ENCODE measurements at regions of chr7 and their contacts with region 1.

Region 1: GRCh38 chr7:7103343-7104313 is 78.7 kb upstream of the C1GALT1 start:
- DNase-seq: peak; percentile 7
- ATAC-seq: peak; percentile 88
- H3K4me3 ChIP-seq: no peak overlapping the region
- H3K27ac ChIP-seq: no peak overlapping the region
- H3K4me1 ChIP-seq: no peaks in the 10 kb centered on the region
- H3K27me3 ChIP-seq: no peaks in the 10 kb centered on the region
- CTCF ChIP-seq: peak; percentile 49 to 69 (median 56); a peak in 5 of 6 replicates
- EP300 ChIP-seq: no peak
- POLR2A ChIP-seq: no peak
- RAD21 ChIP-seq: peak; percentile 81

Region 2: DNA sequence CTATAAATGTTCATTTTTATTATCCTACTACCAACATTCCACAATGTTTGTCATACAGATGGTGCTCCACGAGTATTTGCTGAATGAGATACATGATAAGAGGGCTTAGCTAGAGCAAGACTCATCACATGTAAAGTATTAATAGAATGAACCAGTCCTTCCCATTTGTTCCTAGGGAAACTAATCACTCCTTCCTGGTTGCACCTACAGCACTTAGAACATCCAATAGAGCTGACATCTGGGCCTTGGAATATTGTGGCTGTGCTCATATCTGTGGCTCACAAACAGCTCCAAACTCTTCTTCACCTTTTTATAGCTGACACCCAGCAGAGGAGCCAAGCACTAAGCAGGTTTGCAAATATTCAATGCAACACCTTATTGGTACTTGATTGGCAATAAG is 13.2 kb before region 1 on chr7:
- CTCF ChIA-PET with region 1: interaction called, 56 read pairs
- POLR2A ChIA-PET with region 1: no interaction called
- RAD21 ChIA-PET with region 1: interaction called, 4 read pairs
- SMC1A ChIA-PET with region 1: interaction called, 5 read pairs
- in situ Hi-C with region 1: no loop called
- intact Hi-C with region 1: no loop called
- DNase-seq: no peak
- ATAC-seq: no peak
- H3K4me3 ChIP-seq: no peak overlapping the region
- H3K27ac ChIP-seq: no peak overlapping the region
- H3K4me1 ChIP-seq: no peaks in the 10 kb centered on the region
- H3K27me3 ChIP-seq: no peaks in the 10 kb centered on the region
- CTCF ChIP-seq: no peak
- EP300 ChIP-seq: no peak
- POLR2A ChIP-seq: no peak
- RAD21 ChIP-seq: no peak

Region 3: DNA sequence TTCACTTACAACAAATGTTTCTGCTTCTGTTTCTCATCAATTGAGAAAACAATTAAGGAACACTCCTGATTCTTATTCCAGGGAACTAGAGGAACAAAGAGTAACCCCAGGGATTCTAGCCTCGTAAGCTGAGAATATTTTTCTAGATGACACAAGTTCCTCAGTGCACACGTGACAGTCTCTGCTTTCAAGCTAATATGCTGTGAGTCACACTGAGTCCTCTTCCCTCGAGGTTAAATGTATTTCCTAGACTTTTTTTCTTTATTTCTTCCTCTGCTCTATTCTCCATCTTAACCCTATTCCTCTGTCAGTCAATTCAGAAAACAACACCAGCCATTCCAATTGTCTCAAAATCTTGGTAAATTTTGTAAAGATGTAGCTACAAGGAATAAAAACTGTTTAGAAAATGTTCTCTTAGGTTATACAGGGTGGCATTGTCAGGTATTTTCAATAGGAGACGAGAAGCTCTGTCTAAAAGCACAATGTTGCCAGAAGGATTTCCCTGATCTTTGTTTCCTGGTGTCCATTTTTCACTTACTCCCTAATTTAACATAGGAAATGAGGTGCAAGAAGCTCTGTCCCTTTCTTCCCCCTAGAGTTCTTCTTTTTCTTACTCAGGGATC is 72.9 kb after region 1 on chr7:
- CTCF ChIA-PET with region 1: interaction called, 8 read pairs
- POLR2A ChIA-PET with region 1: no interaction called
- RAD21 ChIA-PET with region 1: interaction called, 9 read pairs
- SMC1A ChIA-PET with region 1: interaction called, 10 read pairs
- in situ Hi-C with region 1: no loop called
- intact Hi-C with region 1: no loop called
- DNase-seq: no peak
- ATAC-seq: no peak
- H3K4me3 ChIP-seq: no peak overlapping the region
- H3K27ac ChIP-seq: no peak overlapping the region
- H3K4me1 ChIP-seq: peaks cover 3% of the 10 kb centered on the region
- H3K27me3 ChIP-seq: no peaks in the 10 kb centered on the region
- CTCF ChIP-seq: no peak
- EP300 ChIP-seq: no peak
- POLR2A ChIP-seq: no peak
- RAD21 ChIP-seq: no peak

Region 4: DNA sequence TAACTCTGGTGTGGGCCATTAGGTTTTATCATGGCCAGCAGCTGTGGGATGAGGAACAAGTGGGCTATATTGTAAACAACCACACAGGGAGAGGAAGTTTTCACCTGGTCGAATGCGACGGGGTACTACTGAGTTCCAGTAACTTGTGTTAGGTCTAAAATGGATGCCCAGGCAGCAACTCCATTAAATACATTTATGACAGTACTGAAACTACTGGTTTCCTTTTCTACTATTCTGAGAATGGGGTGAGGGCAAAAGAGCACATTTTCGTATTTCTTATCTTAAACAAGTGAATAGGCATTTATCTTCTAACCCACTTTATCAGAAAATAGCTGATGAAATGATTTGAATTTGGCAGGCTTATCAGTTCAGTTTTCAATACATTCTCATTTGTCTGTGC is 188.5 kb after region 1 on chr7:
- CTCF ChIA-PET with region 1: interaction called, 5 read pairs
- POLR2A ChIA-PET with region 1: no interaction called
- RAD21 ChIA-PET with region 1: no interaction called
- SMC1A ChIA-PET with region 1: no interaction called
- in situ Hi-C with region 1: no loop called
- intact Hi-C with region 1: loop called (anchors 10 kb)
- DNase-seq: no peak
- ATAC-seq: no peak; the same call in 2 of the 3 replicates
- H3K4me3 ChIP-seq: no peak overlapping the region
- H3K27ac ChIP-seq: no peak overlapping the region
- H3K4me1 ChIP-seq: no peaks in the 10 kb centered on the region
- H3K27me3 ChIP-seq: no peaks in the 10 kb centered on the region
- CTCF ChIP-seq: no peak
- EP300 ChIP-seq: no peak
- POLR2A ChIP-seq: no peak
- RAD21 ChIP-seq: no peak

Region 5: DNA sequence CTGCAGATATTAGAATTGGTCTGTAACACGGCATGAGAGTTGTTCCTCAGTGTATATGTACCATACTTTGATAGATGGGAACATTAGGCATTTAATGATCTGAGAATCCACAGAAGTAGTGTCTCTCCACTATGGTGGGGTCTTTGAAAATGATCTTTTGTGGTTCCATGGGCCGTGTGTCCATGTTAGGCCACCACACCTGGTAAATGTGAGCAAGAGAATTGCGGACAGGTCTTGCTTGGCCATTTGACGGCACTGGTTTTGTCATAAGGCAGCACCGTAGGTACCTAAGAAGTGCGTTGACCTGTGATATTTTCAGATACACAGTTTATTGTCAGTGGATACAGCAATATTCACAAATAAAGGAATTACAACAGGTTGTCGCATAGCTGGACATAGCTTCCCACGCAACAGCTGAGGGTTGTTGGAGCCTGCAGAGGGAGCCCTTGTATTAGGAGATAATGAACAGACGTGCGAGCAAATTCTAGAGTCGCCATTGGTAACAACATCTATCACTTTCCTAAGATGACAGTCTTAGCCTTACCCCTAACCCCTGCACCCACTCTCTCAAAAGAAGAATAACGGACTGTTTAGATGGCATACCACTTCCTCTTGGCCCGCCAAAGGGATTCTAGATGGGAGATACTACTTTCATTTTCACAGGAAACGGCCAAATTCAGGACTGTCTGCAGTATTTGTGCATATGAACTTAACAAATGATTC is 320.7 kb after region 1 on chr7:
- CTCF ChIA-PET with region 1: interaction called, 27 read pairs
- POLR2A ChIA-PET with region 1: no interaction called
- RAD21 ChIA-PET with region 1: interaction called, 8 read pairs
- SMC1A ChIA-PET with region 1: interaction called, 17 read pairs
- in situ Hi-C with region 1: no loop called
- intact Hi-C with region 1: loop called (anchors 5 kb)
- DNase-seq: peak; percentile 37
- ATAC-seq: peak; percentile 92
- H3K4me3 ChIP-seq: peak overlapping the region; percentile 41
- H3K27ac ChIP-seq: no peak overlapping the region
- H3K4me1 ChIP-seq: no peaks in the 10 kb centered on the region
- H3K27me3 ChIP-seq: no peaks in the 10 kb centered on the region
- CTCF ChIP-seq: peak; percentile 66 to 75 (median 66)
- EP300 ChIP-seq: no peak
- POLR2A ChIP-seq: no peak
- RAD21 ChIP-seq: peak; percentile 76

Region 6: GRCh38 chr7:7542251-7542835 is 438.7 kb after region 1 on chr7:
- CTCF ChIA-PET with region 1: interaction called, 20 read pairs
- POLR2A ChIA-PET with region 1: no interaction called
- RAD21 ChIA-PET with region 1: interaction called, 11 read pairs
- SMC1A ChIA-PET with region 1: interaction called, 23 read pairs
- in situ Hi-C with region 1: loop called (anchors 5 kb)
- intact Hi-C with region 1: loop called (anchors 2 kb)
- DNase-seq: no peak
- ATAC-seq: no peak
- H3K4me3 ChIP-seq: no peak overlapping the region
- H3K27ac ChIP-seq: no peak overlapping the region
- H3K4me1 ChIP-seq: no peaks in the 10 kb centered on the region
- H3K27me3 ChIP-seq: no peaks in the 10 kb centered on the region
- CTCF ChIP-seq: no peak
- EP300 ChIP-seq: no peak
- POLR2A ChIP-seq: no peak
- RAD21 ChIP-seq: no peak

Region 7: DNA sequence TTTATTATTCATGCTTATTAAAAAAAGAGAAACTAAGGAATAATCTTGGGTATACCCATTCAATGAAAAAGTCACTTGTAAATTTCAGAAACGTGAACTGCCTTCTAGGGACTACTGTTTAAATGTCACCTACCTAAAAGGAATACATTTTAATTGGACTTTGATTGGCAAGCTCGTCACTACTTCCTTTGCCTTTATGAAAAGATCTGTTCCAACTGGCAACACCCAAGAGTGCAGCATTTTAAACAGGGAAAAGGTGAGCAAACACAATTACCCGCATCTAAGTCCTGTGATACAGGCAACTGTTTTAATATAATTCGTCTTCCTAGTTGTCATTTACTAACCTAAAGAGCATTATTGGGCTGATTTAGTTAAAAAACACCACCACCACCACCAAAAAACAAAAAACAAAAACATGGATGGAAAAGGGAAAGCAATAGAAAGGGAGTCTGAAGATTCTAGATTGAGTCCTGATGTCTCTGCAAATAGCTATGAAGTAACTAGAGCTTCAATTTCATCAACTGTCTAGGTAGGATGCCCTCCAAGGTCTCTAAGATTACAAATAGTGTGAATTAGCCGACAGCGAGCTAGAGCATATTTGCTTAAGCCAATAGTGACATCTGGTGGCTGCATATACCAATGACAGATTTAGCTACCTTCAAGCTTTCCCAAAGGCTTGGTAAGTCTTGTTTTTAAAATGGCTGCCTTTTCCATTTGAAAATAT is 1192.2 kb after region 1 on chr7:
- CTCF ChIA-PET with region 1: interaction called, 24 read pairs
- POLR2A ChIA-PET with region 1: no interaction called
- RAD21 ChIA-PET with region 1: interaction called, 14 read pairs
- SMC1A ChIA-PET with region 1: interaction called, 17 read pairs
- in situ Hi-C with region 1: no loop called
- intact Hi-C with region 1: loop called (anchors 2 kb)
- DNase-seq: peak; percentile 43
- ATAC-seq: peak; percentile 99
- H3K4me3 ChIP-seq: no peak overlapping the region
- H3K27ac ChIP-seq: no peak overlapping the region
- H3K4me1 ChIP-seq: no peaks in the 10 kb centered on the region
- H3K27me3 ChIP-seq: no peaks in the 10 kb centered on the region
- CTCF ChIP-seq: peak; percentile 64 to 90 (median 75)
- EP300 ChIP-seq: no peak
- POLR2A ChIP-seq: no peak
- RAD21 ChIP-seq: peak; percentile 92